ENCODE measurements at regions of chr20 and their contacts with region 1.

Region 1: GRCh38 chr20:63009045-63009961 is 2.5 kb upstream of the BHLHE23 start:
- DNase-seq: peak; percentile 38 to 93
- H3K4me3 ChIP-seq: no peak overlapping the region
- CTCF ChIP-seq: peak in 1 of 3 donors; percentile 81
- POLR2A ChIP-seq: no peak

Region 2: DNA sequence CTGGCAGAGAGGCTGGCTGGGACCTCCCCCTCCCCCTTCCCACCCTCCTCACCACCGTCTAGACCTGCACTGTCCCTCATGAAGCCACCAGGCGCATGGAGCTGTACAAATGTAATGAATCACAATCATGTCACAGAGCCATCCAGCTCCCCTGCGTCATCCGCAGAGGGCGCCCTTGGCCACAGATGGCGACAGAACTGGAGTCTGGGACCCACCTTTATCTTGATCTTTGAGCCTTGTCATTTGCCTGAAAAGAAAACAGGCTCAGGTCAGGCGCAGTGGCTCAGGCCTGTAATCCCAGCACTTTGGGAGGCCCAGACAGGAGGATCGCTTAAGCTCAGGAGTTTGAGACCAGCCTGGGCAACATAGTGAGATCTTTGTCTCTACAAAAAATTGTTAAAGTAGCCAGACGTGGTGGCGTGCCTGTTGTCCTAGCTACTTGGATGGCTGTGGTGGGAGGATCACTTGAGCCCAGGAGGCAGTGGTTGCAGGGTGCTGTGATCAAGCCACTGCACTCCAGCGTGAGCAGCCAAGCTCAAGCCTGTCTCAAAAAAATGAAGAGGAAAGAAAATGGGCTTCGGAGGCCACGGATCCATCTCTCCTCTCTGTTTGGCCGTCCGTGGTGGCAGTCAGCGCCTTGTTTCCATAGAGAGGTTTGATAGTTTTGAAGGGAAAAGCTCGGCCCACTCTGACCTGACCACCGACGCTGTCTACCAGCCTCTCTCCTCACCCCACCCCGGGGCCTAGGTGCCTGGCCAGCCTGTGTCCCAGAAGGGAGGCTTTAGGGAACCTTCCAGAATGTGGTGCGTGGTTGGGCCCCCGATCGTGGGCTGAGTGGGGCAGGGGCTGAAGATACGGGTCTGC is 186.3 kb before region 1 on chr20:
- intact Hi-C with region 1: loop called (anchors 10 kb)
- DNase-seq: no peak
- H3K4me3 ChIP-seq: no peak overlapping the region
- CTCF ChIP-seq: peak in 1 of 3 donors; percentile 39
- POLR2A ChIP-seq: no peak

Region 3: DNA sequence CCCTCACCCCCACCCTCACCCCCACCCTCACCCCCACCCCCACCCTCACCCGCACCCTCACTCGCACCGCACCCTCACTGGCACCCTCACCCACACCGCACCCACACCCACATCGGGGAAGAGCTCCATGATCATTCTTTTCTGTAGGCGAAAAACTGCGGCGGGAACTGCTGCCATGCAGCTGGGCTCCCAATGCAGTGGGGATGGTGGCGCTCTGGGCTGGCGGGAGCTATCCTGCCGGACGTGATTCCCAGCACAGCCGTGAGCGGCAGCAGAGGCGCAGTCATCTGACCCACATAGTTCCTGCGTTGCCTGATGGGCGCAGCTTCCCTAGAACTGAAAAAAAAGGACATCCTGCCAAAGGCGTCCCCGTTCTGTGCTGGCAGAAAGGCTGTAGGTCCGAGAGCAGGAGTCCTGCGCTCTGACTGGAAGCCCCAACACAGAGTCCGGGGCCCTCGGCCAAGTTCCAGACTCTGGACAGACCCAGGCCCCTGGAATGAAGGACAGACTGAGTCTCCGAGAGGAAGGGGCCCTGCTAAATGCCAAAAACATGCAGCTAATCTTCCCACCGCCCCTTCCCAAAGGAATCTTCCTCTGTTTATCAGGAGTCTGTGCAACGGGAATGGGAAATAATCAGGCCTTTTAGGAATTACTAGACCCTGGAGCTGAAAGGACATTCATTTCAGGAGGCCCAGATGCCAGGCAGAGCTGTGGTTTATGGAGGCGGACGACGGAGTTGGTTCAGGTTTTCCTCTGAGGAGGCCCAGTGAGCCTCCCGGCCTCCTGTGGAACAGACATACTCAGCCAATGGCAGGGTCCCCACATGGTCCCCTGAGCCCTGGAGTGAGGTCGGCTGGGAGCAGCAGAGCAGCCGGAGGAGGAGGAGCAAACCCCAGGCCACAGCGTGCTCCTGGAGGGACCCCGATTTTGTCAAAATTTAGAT is 133.6 kb before region 1 on chr20:
- intact Hi-C with region 1: loop called (anchors 10 kb)
- DNase-seq: peak; percentile 73 to 96
- H3K4me3 ChIP-seq: no peak overlapping the region
- CTCF ChIP-seq: no peak
- POLR2A ChIP-seq: no peak

Region 4: GRCh38 chr20:62907384-62908317 is 101.7 kb before region 1 on chr20:
- intact Hi-C with region 1: no loop called
- DNase-seq: no peak
- H3K4me3 ChIP-seq: no peak overlapping the region
- CTCF ChIP-seq: no peak
- POLR2A ChIP-seq: no peak

Region 5: DNA sequence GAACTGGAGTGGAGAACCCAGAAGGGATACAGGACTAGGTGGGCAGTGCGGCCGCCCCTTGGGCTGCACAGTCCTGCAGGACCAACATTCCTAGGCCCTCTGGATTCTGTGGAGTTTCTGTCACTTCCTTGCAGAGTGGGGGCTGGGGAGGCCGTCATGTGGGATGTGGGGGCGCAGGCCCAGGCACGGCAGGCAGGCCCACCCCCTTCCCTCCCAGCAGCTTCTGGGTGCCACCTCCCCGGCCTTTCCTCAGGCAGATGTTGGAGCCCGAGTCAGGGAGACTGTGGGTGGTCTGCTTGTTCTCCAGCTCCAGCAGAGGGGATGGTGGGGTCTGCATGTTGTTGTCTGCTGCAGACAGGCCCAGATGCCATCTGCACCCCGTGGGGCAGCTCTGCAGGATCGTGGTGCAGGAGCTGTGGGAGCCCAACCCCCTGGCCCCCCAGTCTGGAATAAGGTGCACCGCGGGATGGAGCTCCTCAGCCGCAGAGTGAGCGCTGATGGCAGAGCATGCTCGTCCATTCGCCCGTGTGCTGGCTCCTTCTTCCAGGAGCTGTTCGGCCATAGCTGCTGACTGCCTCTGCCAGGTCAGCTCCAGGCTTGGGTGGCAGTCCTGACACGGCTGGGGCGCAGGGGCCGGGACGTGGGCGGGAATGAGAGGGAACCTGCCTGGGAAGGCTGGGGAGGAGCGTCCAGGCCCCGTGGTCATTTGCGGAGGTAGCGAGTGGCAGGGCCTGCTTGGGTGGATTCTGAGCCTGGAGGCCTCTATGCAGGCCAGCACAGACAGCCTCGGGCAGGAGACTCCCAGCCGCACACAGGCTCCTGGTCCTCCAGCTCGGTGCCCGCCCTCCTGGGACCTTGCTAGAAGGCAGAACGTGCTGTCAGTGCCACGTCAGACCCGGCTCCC is 38.7 kb before region 1 on chr20:
- intact Hi-C with region 1: loop called (anchors 2 kb)
- DNase-seq: no peak
- H3K4me3 ChIP-seq: no peak overlapping the region
- CTCF ChIP-seq: no peak
- POLR2A ChIP-seq: no peak

Region 6: GRCh38 chr20:63686492-63687321 is 677.4 kb after region 1 on chr20:
- intact Hi-C with region 1: no loop called
- DNase-seq: peak; percentile 73 to 94
- H3K4me3 ChIP-seq: no peak overlapping the region
- CTCF ChIP-seq: no peak
- POLR2A ChIP-seq: no peak